GM12878 (cell line): ENCODE measurements at regions of chr12 and their contacts with region 1.

Region 1: GRCh38 chr12:14365294-14366208 is at the start of gene ATF7IP:
- DNase-seq: peak; percentile 83
- ATAC-seq: peak; percentile 77
- H3K4me3 ChIP-seq: peak within 1 kb of the TSS; percentile 59
- H3K27ac ChIP-seq: peak within 1 kb of the TSS; percentile 89
- H3K4me1 ChIP-seq: peaks cover 12% of the 10 kb centered on the region
- H3K27me3 ChIP-seq: no peaks in the 10 kb centered on the region
- CTCF ChIP-seq: peak in 2 of 3 experiments; percentile 27 to 32; a peak in 3 of 6 replicates
- EP300 ChIP-seq: peak; percentile 30 to 83; a peak in 2 of 4 replicates
- POLR2A ChIP-seq: peak; percentile 91
- RAD21 ChIP-seq: peak; percentile 54
- polyA plus RNA-seq, gene ATF7IP: 6.2 to 8.1 TPM

Region 2: GRCh38 chr12:14157088-14157747 is 208.3 kb before region 1 on chr12:
- CTCF ChIA-PET with region 1: no interaction called
- POLR2A ChIA-PET with region 1: interaction called, 7 read pairs
- RAD21 ChIA-PET with region 1: no interaction called
- SMC1A ChIA-PET with region 1: interaction called, 5 read pairs
- in situ Hi-C with region 1: no loop called
- intact Hi-C with region 1: loop called (anchors 10 kb)
- DNase-seq: peak; percentile 99
- ATAC-seq: peak; percentile 97
- H3K4me3 ChIP-seq: no peak overlapping the region
- H3K27ac ChIP-seq: peak overlapping the region; percentile 86
- H3K4me1 ChIP-seq: peaks cover 44% of the 10 kb centered on the region
- H3K27me3 ChIP-seq: no peaks in the 10 kb centered on the region
- CTCF ChIP-seq: no peak
- EP300 ChIP-seq: peak; percentile 92 to 99
- POLR2A ChIP-seq: no peak
- RAD21 ChIP-seq: no peak

Region 3: DNA sequence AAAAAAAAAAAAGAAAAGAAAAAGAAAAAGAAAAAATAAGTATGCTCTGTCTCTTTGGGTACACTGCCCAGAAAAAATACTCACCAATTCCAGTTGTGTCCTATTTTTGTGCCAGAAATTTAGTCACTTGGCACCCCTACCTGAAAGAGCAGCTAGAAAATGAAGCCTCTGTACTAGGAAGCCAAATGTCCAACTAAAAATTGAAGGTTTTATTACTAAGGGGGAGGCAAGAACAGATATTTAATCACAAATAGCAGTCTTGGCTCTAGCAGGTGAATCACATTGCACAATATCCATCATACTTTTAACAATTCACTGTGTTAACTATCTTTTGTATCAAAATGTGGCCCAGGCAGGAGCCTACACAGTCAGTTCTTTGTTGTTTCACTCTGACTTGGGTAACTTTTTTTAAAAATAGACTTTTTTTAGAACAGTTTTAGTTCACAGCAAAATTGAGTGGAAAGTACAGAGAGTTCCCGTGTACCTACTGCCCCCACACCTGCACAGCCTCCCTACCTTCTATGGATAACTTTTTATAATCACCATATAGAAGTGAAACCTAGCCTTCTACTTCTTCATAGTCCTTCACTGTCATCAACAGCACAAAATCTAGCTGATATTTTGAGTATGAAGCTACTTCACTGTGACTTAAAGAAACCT is 87.1 kb before region 1 on chr12:
- CTCF ChIA-PET with region 1: interaction called, 7 read pairs
- POLR2A ChIA-PET with region 1: interaction called, 5 read pairs
- RAD21 ChIA-PET with region 1: interaction called, 11 read pairs
- SMC1A ChIA-PET with region 1: interaction called, 8 read pairs
- in situ Hi-C with region 1: no loop called
- intact Hi-C with region 1: loop called (anchors 2 kb)
- DNase-seq: no peak
- ATAC-seq: peak; percentile 62
- H3K4me3 ChIP-seq: no peak overlapping the region
- H3K27ac ChIP-seq: peak overlapping the region; percentile 85
- H3K4me1 ChIP-seq: peaks cover 27% of the 10 kb centered on the region
- H3K27me3 ChIP-seq: no peaks in the 10 kb centered on the region
- CTCF ChIP-seq: no peak
- EP300 ChIP-seq: no peak
- POLR2A ChIP-seq: no peak
- RAD21 ChIP-seq: no peak

Region 4: GRCh38 chr12:14384783-14385638 is 19.5 kb after region 1 on chr12:
- CTCF ChIA-PET with region 1: interaction called, 57 read pairs
- POLR2A ChIA-PET with region 1: interaction called, 31 read pairs
- RAD21 ChIA-PET with region 1: interaction called, 97 read pairs
- SMC1A ChIA-PET with region 1: interaction called, 170 read pairs
- in situ Hi-C with region 1: no loop called
- intact Hi-C with region 1: loop called (anchors 1 kb)
- DNase-seq: peak; percentile 92
- ATAC-seq: peak; percentile 90
- H3K4me3 ChIP-seq: peak overlapping the region; percentile 18; the same call in 1 of the 2 replicates
- H3K27ac ChIP-seq: peak overlapping the region; percentile 63
- H3K4me1 ChIP-seq: peaks cover 5% of the 10 kb centered on the region
- H3K27me3 ChIP-seq: no peaks in the 10 kb centered on the region
- CTCF ChIP-seq: no peak
- EP300 ChIP-seq: no peak; a peak in 1 of 4 replicates
- POLR2A ChIP-seq: peak; percentile 46; the same call in 1 of the 2 replicates
- RAD21 ChIP-seq: no peak

Region 5: DNA sequence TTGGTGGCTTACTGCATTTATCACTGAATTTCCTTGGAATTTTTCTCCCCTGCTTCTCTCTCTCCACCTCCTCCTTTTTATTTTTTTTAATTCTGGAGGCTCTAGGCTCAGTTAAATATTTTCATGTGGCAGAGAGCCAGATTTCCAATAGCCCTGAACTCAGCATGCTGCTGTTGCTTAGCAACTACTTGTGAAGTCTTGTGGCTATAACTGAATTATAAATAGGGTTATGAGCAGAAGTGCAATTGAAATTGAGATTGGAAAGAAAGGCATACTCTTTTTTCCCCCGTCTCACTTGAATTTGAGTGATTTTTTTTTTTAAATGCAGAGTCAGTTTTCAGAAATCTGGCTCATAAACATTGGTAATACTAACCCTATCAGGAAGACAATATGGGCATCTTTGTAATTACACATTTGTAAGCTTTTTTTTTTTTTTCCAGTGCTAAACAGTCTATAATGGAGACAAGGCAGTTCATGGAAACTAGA is 38.2 kb after region 1 on chr12:
- CTCF ChIA-PET with region 1: interaction called, 6 read pairs
- POLR2A ChIA-PET with region 1: interaction called, 4 read pairs
- RAD21 ChIA-PET with region 1: interaction called, 9 read pairs
- SMC1A ChIA-PET with region 1: interaction called, 10 read pairs
- in situ Hi-C with region 1: no loop called
- intact Hi-C with region 1: no loop called
- DNase-seq: peak; percentile 49
- ATAC-seq: peak; percentile 75
- H3K4me3 ChIP-seq: peak overlapping the region; percentile 13; the same call in 1 of the 2 replicates
- H3K27ac ChIP-seq: peak overlapping the region; percentile 77
- H3K4me1 ChIP-seq: peaks cover 3% of the 10 kb centered on the region; the same call in 1 of the 2 replicates
- H3K27me3 ChIP-seq: no peaks in the 10 kb centered on the region
- CTCF ChIP-seq: no peak
- EP300 ChIP-seq: no peak
- POLR2A ChIP-seq: no peak
- RAD21 ChIP-seq: no peak

Region 6: GRCh38 chr12:14613718-14614117 is 248.2 kb after region 1 on chr12:
- CTCF ChIA-PET with region 1: interaction called, 3 read pairs
- POLR2A ChIA-PET with region 1: no interaction called
- RAD21 ChIA-PET with region 1: no interaction called
- SMC1A ChIA-PET with region 1: interaction called, 6 read pairs
- in situ Hi-C with region 1: loop called (anchors 5 kb)
- intact Hi-C with region 1: loop called (anchors 5 kb)
- DNase-seq: peak; percentile 93
- ATAC-seq: peak; percentile 95
- H3K4me3 ChIP-seq: peak overlapping the region; percentile 24; the same call in 1 of the 2 replicates
- H3K27ac ChIP-seq: peak overlapping the region; percentile 82
- H3K4me1 ChIP-seq: peaks cover 27% of the 10 kb centered on the region
- H3K27me3 ChIP-seq: no peaks in the 10 kb centered on the region
- CTCF ChIP-seq: no peak
- EP300 ChIP-seq: peak; percentile 86 to 98
- POLR2A ChIP-seq: no peak; the same call in 1 of the 2 replicates
- RAD21 ChIP-seq: no peak

Region 7: DNA sequence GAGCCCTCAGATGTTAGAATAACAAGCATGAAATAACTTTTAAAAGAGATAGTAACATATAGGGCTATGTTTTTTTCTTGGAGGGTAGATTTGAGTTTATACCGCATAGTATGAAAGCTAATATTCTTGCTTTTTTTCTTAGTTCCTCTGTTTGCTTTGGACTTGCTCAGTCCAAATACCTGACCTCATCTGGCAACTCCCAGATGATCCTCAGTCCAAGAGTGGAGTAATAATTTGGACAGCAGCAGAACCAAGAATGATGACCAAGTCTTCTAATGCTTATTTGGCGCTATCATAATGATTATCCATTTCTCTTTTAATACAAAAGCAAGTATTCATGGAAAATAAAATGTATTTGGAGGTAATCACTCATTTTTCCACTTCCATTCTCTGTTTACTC is 285.2 kb after region 1 on chr12:
- CTCF ChIA-PET with region 1: no interaction called
- POLR2A ChIA-PET with region 1: no interaction called
- RAD21 ChIA-PET with region 1: no interaction called
- SMC1A ChIA-PET with region 1: no interaction called
- in situ Hi-C with region 1: no loop called
- intact Hi-C with region 1: no loop called
- DNase-seq: no peak
- ATAC-seq: no peak
- H3K4me3 ChIP-seq: no peak overlapping the region
- H3K27ac ChIP-seq: no peak overlapping the region
- H3K4me1 ChIP-seq: no peaks in the 10 kb centered on the region
- H3K27me3 ChIP-seq: no peaks in the 10 kb centered on the region
- CTCF ChIP-seq: no peak
- EP300 ChIP-seq: no peak
- POLR2A ChIP-seq: no peak
- RAD21 ChIP-seq: no peak

Region 8: DNA sequence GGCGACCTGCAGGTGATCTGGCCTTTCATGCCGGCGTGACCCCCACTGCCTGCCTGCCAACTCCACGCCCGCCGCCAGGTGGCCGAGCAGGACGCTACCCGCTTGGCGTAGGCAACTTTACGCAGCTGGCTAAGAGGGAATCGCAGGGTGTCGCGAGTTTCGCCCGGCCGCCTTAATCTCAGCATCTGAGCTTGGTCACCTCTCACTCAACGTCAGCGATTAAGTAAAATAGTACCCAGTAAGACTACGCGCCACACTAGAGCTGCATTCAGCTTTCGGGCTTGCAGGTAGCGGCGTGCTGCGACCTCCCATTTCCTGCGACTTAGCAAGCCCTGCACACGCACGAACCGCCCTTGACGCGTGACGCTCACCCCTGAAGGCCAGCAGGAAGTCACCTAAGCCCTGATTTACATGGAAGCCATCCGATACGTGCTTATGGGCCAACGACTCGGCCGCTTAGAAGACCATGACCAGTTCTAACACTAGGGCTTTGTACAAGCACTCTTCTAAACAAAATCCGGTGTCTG is 404.5 kb after region 1 on chr12:
- CTCF ChIA-PET with region 1: interaction called, 4 read pairs
- POLR2A ChIA-PET with region 1: interaction called, 4 read pairs
- RAD21 ChIA-PET with region 1: interaction called, 4 read pairs
- SMC1A ChIA-PET with region 1: interaction called, 4 read pairs
- in situ Hi-C with region 1: no loop called
- intact Hi-C with region 1: loop called (anchors 5 kb)
- DNase-seq: peak; percentile 84
- ATAC-seq: peak; percentile 63
- H3K4me3 ChIP-seq: peak overlapping the region; percentile 83
- H3K27ac ChIP-seq: peak overlapping the region; percentile 99
- H3K4me1 ChIP-seq: peaks cover 2% of the 10 kb centered on the region
- H3K27me3 ChIP-seq: no peaks in the 10 kb centered on the region
- CTCF ChIP-seq: peak; percentile 81 to 87 (median 87)
- EP300 ChIP-seq: peak; percentile 11 to 58; a peak in 3 of 4 replicates
- POLR2A ChIP-seq: peak; percentile 89
- RAD21 ChIP-seq: peak; percentile 37; the same call in 1 of the 2 replicates

Region 9: GRCh38 chr12:15033641-15034040 is 668.1 kb after region 1 on chr12:
- CTCF ChIA-PET with region 1: no interaction called
- POLR2A ChIA-PET with region 1: no interaction called
- RAD21 ChIA-PET with region 1: no interaction called
- SMC1A ChIA-PET with region 1: no interaction called
- in situ Hi-C with region 1: no loop called
- intact Hi-C with region 1: no loop called
- DNase-seq: no peak
- ATAC-seq: no peak
- H3K4me3 ChIP-seq: no peak overlapping the region
- H3K27ac ChIP-seq: no peak overlapping the region
- H3K4me1 ChIP-seq: no peaks in the 10 kb centered on the region
- H3K27me3 ChIP-seq: no peaks in the 10 kb centered on the region
- CTCF ChIP-seq: no peak
- EP300 ChIP-seq: no peak
- POLR2A ChIP-seq: no peak
- RAD21 ChIP-seq: no peak